Cardiac septum (tissue), 1 donor: ENCODE measurements at regions of chr16 and their contacts with region 1.

Region 1: DNA sequence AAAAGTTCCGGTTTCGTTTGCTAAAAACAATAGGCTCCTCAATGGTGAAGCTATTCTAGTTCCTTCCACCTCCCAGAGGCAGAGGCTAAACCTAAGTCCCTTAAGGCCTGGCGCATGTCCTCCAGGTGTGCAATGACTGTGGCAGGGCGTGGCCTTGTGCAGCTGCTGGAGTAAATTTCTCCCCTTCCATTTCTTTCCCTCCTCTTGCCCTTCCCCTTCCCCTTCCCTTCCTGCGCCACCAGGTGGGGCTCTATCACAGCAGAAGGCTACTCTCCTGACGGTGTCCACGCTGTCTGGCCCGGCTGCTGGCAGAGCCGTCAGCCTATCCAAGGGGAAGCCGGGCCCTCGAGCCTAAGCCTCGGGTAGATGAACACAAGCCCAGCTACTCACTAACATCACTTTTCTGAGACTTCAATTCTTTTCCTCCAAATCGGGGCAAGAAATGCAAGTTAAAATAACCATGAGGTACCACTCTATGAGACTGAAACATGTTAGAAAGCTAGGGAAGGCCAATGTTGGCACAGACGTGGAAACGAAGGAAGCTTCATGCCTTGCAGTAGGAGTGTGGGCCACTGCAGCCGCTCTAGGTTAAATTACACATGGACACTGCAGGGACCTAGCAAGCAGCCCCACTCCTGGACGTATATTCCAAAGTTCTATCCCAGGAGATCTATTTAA is 34.4 kb downstream of the C16orf78 start:
- DNase-seq: peak; percentile 89

Region 2: DNA sequence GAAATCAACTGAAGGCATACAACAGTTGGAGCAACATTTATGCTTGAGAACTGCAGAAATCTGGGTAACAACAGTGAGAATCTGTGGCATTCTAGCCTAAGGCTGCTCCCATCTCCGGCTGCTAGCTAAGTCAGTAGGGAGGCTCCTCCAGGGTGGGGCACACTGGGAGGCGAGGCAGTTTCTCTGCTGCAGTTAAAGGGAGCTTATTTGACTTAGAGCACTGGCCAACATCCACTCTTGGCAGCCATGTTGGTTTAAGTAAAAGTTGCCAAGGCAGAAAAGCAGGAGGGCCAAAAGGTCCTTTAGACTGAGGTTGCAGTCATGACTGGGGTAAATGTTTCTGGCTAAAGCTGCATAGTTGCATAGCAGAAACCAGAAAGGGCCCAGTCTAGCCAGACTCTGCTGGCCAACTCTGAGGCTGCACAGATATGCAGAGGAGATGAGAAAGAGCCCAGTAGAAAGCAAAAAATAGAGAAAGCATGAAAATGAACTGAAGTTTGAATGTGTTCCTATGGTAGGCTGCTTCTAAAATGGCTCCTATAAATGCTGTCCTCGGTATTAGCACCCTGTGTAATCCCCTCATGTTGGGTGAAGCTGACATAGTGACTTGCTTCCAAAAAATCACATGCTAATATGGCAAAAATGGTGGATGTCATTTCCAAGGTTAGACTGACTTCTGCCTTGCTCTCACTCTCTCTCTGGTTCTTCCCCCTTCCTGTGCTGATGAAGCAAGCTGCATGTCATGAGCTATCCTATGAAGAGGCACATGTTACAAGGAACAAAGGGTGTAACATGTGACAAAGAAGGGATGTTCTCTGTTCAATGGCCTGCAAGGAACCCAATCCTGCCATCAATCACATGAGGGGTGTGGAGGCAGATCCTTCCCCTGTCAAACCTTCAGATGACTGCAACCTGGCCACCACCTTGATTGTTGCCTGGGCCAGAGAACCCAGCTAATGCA is 38.1 kb before region 1 on chr16:
- intact Hi-C with region 1: no loop called
- DNase-seq: no peak

Region 3: DNA sequence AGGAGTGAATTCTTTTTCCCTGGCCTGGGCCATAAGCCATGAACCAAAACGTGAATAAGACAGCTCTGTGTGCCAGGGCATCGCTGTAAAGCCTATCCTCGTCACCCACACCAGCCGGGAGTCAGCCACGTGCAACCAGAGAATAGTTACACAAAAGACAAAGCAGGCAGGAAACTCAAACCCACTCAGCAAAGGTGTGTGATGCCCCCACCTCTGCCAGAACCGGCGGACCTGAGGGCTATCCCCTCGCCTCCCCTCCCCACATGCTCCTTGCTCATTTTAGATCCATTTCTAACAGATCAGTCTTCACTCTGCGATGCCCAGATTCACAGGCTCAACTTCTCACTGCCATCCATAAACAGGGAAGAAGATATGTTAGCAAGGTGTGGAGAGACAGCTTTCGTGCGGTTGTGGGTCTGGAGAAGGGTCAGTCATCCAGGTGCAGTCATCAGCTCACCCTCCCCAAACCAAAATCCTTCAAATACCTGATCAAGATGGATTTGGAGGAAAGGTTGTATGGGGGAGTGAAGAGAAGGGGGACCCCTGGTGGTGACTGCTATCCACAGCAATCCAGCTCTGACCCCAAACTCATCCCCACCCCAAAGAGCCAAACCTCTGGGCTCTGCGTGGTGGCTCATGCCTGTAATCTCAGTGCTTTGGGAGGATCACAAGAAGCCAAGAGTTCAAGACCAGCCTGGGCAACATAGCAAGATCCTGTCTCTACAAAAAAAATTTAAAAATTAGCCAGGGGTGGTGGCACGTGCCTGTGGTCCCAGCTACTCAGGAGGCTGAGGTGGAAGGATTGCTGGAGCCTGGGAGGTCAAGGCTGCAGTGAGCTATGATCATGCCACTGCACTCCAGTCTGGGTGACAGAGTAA is 184.8 kb after region 1 on chr16:
- intact Hi-C with region 1: loop called (anchors 2 kb)
- DNase-seq: peak; percentile 35

Region 4: DNA sequence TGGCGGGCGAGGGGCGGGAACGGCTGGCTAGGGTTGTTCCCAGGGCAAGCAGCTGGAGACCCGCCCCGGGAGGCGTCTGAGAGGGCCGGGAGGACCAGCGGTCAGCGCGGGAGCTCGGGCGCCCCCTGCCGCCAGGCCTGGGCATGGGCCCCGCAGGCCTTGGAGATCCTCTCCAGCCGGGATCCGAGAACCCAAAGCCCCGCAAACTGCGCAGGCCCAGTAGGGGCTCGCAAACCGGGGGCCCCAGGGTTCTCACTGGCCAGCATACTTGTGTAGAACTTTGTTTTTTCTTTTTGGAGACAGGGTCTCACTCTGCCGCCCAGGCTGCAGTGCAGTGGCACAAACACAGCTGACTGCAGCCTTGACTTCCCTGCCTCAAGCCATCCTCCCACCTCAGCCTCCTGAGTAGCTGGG is 468.7 kb after region 1 on chr16:
- intact Hi-C with region 1: loop called (anchors 5 kb)
- DNase-seq: peak; percentile 82

Region 5: GRCh38 chr16:49921791-49922456 is 513.9 kb after region 1 on chr16:
- intact Hi-C with region 1: loop called (anchors 1 kb)
- DNase-seq: peak; percentile 76